Activated naive CD8-positive, alpha-beta T cell treated with anti-CD3 and anti-CD28 coated beads, Interleukin-2, amount 10 ng/mL, durations not matched to agents 7 days and 5 days (primary cell): ENCODE measurements at regions of chr21 and their contacts with region 1.

Region 1: GRCh38 chr21:44873356-44874239 is at the start of gene PTTG1IP:
- DNase-seq: peak; percentile 100
- ATAC-seq: peak; percentile 80
- H3K4me3 Mint-ChIP-seq: peak within 1 kb of the TSS; percentile 97
- H3K27ac Mint-ChIP-seq: peak within 1 kb of the TSS; percentile 96
- H3K4me1 Mint-ChIP-seq: peaks cover 44% of the 10 kb centered on the region
- H3K27me3 Mint-ChIP-seq: peaks cover 7% of the 10 kb centered on the region
- total RNA-seq, gene PTTG1IP: 66.1 to 73.2 TPM

Region 2: DNA sequence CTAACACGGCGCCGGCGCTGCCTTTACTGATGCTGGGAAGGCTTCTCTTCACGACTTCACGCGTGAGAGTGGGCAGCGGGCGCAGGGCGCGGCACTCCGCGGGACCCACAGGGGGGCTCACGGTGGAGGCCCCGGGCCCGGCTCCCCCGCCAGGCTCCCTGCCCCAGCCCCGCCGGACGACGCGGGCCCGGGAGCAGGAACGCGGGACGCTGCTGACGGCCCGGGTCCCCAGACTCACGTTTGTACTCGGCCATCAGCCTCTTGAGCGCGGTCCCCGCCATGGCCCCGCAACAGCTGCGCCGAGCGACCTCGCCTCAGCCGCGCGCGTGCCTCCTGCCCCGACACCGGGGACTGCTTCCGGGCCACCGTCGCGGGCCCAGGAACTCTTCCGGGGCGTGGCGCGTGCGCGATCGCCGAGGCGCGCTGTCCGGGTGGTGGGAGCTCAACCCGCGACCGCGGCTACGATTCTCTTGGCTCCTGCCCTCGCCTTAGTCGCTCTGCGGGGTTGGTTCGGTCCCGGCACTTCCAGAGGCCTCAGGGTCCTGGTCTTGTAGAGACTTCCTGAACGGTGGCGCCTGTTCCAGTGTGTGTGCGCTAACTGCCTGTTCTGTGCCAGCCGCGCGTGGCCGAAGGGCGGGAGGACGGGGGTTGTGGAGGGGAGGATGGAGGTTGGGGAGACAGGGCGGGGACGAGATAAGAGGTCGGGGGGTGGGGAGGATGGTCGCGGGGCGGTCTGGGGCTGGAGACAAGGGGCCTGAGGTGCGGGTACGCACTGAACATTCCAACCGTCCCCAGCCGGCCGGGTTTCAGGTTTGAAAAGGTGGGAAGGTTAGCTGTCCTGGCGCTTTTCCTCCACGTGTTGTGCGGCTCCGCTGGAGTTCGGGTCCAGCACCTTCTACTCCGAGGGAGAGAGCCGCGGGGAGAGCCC is 71.9 kb before region 1 on chr21 and contains the start of gene UBE2G2:
- POLR2A ChIA-PET with region 1: interaction called, 29 read pairs
- DNase-seq: peak; percentile 94
- ATAC-seq: peak; percentile 94
- H3K4me3 Mint-ChIP-seq: peak within 1 kb of the TSS; percentile 99
- H3K27ac Mint-ChIP-seq: peak within 1 kb of the TSS; percentile 87
- H3K4me1 Mint-ChIP-seq: peaks cover 38% of the 10 kb centered on the region
- H3K27me3 Mint-ChIP-seq: no peaks in the 10 kb centered on the region
- total RNA-seq, gene UBE2G2: 111 TPM

Region 3: DNA sequence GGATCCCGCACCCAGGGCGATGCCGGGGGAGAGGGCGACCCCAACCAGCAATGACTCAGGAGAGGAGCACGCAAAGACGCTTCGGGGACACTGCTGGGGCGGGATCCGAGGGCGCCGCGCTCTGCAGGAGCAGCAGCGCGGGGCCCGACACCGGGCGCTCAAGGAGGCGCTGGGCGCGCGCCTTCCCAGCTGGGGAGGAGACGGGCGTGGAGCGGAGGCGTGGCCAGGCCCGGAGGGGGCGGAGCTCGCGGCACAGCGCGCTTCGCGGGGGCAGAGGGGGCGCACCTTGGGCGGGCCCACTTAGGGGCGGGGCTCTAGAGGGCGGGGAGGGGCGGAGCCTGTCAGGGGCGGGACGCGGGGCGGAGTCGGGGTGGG is 56.1 kb before region 1 on chr21:
- POLR2A ChIA-PET with region 1: interaction called, 10 read pairs
- DNase-seq: peak; percentile 99
- ATAC-seq: peak; percentile 84
- H3K4me3 Mint-ChIP-seq: peak overlapping the region; percentile 73
- H3K27ac Mint-ChIP-seq: no peak overlapping the region
- H3K4me1 Mint-ChIP-seq: peaks cover 11% of the 10 kb centered on the region
- H3K27me3 Mint-ChIP-seq: peaks cover 2% of the 10 kb centered on the region

Region 4: GRCh38 chr21:44858778-44859177 is 14.8 kb before region 1 on chr21:
- POLR2A ChIA-PET with region 1: no interaction called
- DNase-seq: no peak
- ATAC-seq: no peak
- H3K4me3 Mint-ChIP-seq: no peak overlapping the region
- H3K27ac Mint-ChIP-seq: no peak overlapping the region
- H3K4me1 Mint-ChIP-seq: peaks cover 8% of the 10 kb centered on the region
- H3K27me3 Mint-ChIP-seq: no peaks in the 10 kb centered on the region

Region 5: DNA sequence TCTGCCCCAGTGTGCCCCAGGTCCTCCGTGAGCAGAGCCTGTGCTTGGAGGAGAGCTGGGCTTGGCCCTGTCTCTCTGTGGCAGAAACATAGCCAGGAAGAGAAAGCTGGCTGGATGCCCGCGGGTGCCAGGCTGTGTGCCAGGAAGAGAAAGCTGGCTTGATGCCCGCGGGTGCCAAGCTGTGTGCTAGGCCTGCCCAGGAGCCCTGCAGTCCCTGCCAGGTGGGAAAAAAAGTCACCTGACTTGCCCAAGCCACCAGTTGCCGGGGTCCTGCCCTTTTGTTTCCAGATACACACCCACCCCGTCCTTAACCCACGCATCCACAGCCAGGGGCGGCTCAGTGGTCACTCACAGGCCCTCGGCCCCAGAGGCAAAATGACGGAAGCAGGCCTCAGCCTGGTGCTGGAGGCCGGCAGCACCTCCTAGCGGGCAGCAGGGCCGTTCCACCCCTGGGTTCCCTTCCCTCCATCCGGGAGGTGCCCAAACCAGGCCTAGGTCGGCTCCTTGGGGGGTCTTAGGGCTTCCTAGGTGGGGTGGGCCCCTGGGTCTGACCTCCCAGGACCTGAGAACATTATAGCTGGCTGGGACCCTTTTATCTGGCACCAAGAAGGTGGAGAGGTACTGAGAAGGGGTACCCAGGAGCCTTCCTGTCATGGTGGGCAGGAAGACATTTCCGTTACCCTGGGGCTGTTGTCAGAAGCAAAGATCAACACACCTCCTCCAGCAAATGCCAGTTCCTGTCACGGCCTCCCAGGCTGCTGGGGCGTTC is 38.0 kb after region 1 on chr21:
- POLR2A ChIA-PET with region 1: interaction called, 18 read pairs
- DNase-seq: peak; percentile 79
- ATAC-seq: peak; percentile 61
- H3K4me3 Mint-ChIP-seq: peak overlapping the region; percentile 83
- H3K27ac Mint-ChIP-seq: peak overlapping the region; percentile 97
- H3K4me1 Mint-ChIP-seq: peaks cover 38% of the 10 kb centered on the region
- H3K27me3 Mint-ChIP-seq: no peaks in the 10 kb centered on the region

Region 6: GRCh38 chr21:44920694-44921604 is 47.4 kb after region 1 on chr21 and contains the start of gene ITGB2:
- POLR2A ChIA-PET with region 1: interaction called, 34 read pairs
- DNase-seq: peak; percentile 70
- ATAC-seq: peak; percentile 74
- H3K4me3 Mint-ChIP-seq: peak within 1 kb of the TSS; percentile 100
- H3K27ac Mint-ChIP-seq: peak within 1 kb of the TSS; percentile 99
- H3K4me1 Mint-ChIP-seq: peaks cover 53% of the 10 kb centered on the region
- H3K27me3 Mint-ChIP-seq: no peaks in the 10 kb centered on the region
- total RNA-seq, gene ITGB2: 416 to 452 TPM

Region 7: GRCh38 chr21:44927587-44928461 is 54.2 kb after region 1 on chr21:
- POLR2A ChIA-PET with region 1: interaction called, 31 read pairs
- DNase-seq: peak; percentile 73
- ATAC-seq: peak; percentile 77
- H3K4me3 Mint-ChIP-seq: peak overlapping the region; percentile 83
- H3K27ac Mint-ChIP-seq: peak overlapping the region; percentile 91
- H3K4me1 Mint-ChIP-seq: peaks cover 70% of the 10 kb centered on the region
- H3K27me3 Mint-ChIP-seq: no peaks in the 10 kb centered on the region